Activated CD4-positive, alpha-beta T cell treated with anti-CD3 and anti-CD28 coated beads for 36 hours (primary cell): ENCODE measurements at regions of chr9 and their contacts with region 1.

Region 1: DNA sequence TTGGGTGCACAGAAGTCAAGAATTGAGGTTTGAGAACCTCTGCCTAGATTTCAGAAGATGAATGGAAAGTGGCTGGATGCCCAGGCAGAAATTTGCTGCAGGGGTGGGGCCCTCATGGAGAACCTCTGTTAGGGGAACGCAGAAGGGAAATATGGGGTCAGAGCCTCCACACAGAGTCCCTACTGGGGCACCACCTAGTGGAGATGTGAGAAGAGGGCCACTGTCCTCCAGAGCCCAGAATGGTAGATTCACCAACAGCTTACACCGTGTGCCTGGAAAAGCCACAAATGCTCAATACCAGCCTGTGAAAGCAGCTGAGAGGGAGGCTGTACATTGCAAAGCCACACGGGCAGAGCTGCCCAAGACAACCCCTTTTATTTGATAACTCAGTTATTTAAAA is 383.5 kb downstream of the TLE4 start:
- DNase-seq: peak; percentile 38
- ATAC-seq: no peak
- H3K4me3 Mint-ChIP-seq: no peak overlapping the region
- H3K27ac Mint-ChIP-seq: no peak overlapping the region
- H3K4me1 Mint-ChIP-seq: no peaks in the 10 kb centered on the region
- H3K27me3 Mint-ChIP-seq: no peaks in the 10 kb centered on the region

Region 2: GRCh38 chr9:78820855-78821822 is 1134.2 kb before region 1 on chr9:
- CTCF ChIA-PET with region 1: no interaction called
- POLR2A ChIA-PET with region 1: no interaction called
- intact Hi-C with region 1: loop called in 1 of 2 experiments (anchors 10 kb)
- DNase-seq: no peak
- ATAC-seq: peak; percentile 49
- H3K4me3 Mint-ChIP-seq: peak overlapping the region; percentile 39
- H3K27ac Mint-ChIP-seq: no peak overlapping the region
- H3K4me1 Mint-ChIP-seq: peaks cover 4% of the 10 kb centered on the region
- H3K27me3 Mint-ChIP-seq: no peaks in the 10 kb centered on the region

Region 3: DNA sequence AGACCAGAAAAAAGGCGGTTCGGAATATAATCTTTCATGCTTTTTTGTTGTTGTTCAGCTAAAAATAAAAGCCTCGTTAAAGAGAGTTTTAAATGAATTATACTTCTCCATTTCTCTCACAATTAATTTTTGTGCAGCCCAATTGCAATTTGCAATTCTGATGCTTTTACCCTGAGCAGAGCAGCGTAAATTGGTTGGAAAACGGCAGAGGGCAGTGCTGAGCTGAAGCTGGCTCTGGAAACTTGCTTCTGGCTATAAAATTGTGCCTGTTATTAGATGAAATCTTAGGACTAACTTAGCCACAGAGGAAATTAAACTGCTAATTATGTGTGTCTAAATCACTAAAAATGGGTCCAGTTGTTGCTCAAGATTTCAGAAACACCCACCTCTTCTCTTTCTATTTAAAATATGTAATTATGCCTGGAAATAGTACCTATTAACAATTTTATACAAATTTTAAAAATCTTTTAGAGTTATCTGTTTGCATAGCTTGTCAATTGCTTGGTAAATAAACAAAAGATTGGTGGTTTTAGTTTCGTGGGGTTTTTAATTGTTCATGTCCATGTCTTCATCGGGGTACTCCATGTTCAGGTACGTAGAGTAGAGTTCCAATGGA is 825.3 kb before region 1 on chr9:
- CTCF ChIA-PET with region 1: no interaction called
- POLR2A ChIA-PET with region 1: no interaction called
- intact Hi-C with region 1: loop called in 1 of 2 experiments (anchors 10 kb)
- DNase-seq: peak; percentile 58
- ATAC-seq: no peak
- H3K4me3 Mint-ChIP-seq: no peak overlapping the region
- H3K27ac Mint-ChIP-seq: no peak overlapping the region
- H3K4me1 Mint-ChIP-seq: no peaks in the 10 kb centered on the region
- H3K27me3 Mint-ChIP-seq: no peaks in the 10 kb centered on the region

Region 4: DNA sequence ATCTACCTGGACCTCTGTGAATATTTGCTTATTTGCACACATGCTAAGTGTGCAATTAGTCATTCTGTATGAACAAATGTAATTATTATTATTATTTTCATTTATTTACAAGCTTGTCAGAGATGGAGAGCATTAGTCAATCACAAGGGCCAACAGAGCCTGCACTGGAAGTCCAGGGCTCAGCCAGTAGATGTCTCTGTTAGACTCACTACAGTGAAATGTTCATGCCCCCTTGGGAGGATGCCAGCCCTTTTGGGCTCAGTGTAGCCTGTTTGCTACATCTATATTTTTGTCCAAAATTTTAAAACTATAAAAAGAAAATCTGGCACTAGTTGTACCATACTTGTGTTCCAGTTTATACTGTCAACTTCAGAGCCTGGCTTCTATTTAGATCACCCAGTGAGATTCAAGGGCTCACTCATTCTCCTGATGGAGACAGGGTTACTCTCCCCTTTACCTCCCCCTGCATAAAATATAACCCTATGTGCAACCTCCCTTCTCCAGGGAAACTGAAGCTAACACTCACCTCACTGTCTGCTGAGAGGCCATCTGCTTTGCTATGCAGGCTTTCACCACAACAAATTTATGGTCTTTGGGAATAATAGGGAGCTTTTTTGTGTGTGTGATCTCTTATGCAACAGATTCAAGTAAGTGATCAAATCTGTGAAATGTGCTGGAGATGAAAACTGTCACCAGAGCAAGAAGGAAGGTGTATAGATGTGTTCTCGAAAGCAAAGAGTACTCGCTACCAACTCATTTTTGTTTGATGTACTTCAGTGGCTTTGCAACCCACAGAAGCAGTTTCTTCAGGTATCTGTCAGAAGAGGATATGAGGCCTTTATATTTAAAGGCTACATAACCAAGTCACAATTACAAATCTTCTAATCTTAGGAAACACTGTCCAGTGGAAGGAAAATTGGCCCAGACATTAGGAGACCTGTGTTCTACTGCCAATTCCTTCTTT is 483.4 kb before region 1 on chr9:
- CTCF ChIA-PET with region 1: no interaction called
- POLR2A ChIA-PET with region 1: no interaction called
- intact Hi-C with region 1: loop called in 1 of 2 experiments (anchors 5 kb)
- DNase-seq: peak; percentile 43
- ATAC-seq: peak; percentile 36
- H3K4me3 Mint-ChIP-seq: no peak overlapping the region
- H3K27ac Mint-ChIP-seq: no peak overlapping the region
- H3K4me1 Mint-ChIP-seq: peaks cover 12% of the 10 kb centered on the region
- H3K27me3 Mint-ChIP-seq: peaks cover 2% of the 10 kb centered on the region